T-cell (primary cell): ENCODE measurements at regions of chr15 and their contacts with region 1.

Region 1: GRCh38 chr15:44137750-44138149 is 57.3 kb downstream of the FRMD5 start:
- DNase-seq: no peak
- ATAC-seq: no peak
- H3K4me3 ChIP-seq: no peak overlapping the region
- H3K4me3 Mint-ChIP-seq: no peak overlapping the region
- H3K27ac ChIP-seq: no peak overlapping the region
- H3K27ac Mint-ChIP-seq: no peak overlapping the region
- H3K4me1 ChIP-seq: no peaks in the 10 kb centered on the region
- H3K4me1 Mint-ChIP-seq: no peaks in the 10 kb centered on the region
- H3K27me3 ChIP-seq: peaks cover 0 to 3% of the 10 kb centered on the region in 2 experiments
- H3K27me3 Mint-ChIP-seq: peaks cover 0 to 2% of the 10 kb centered on the region in 2 donors

Region 2: GRCh38 chr15:44096596-44096995 is 41.2 kb before region 1 on chr15:
- CTCF ChIA-PET with region 1: no interaction called
- POLR2A ChIA-PET with region 1: interaction called in 1 of 2 experiments, 17 read pairs
- DNase-seq: no peak
- ATAC-seq: no peak
- H3K4me3 ChIP-seq: no peak overlapping the region
- H3K4me3 Mint-ChIP-seq: no peak overlapping the region
- H3K27ac ChIP-seq: no peak overlapping the region
- H3K27ac Mint-ChIP-seq: no peak overlapping the region
- H3K4me1 ChIP-seq: no peaks in the 10 kb centered on the region
- H3K4me1 Mint-ChIP-seq: no peaks in the 10 kb centered on the region
- H3K27me3 ChIP-seq: peaks cover 0 to 5% of the 10 kb centered on the region in 2 experiments
- H3K27me3 Mint-ChIP-seq: peaks cover 17 to 25% of the 10 kb centered on the region in 2 donors